ENCODE measurements at regions of chr19 and their contacts with region 1.

Region 1: GRCh38 chr19:46963093-46963734 is 56.4 kb upstream of the NPAS1 start:
- DNase-seq: no peak
- H3K4me3 ChIP-seq: no peak overlapping the region
- H3K27ac ChIP-seq: no peak overlapping the region
- H3K4me1 ChIP-seq: no peaks in the 10 kb centered on the region
- H3K27me3 ChIP-seq: no peaks in the 10 kb centered on the region
- CTCF ChIP-seq: no peak

Region 2: DNA sequence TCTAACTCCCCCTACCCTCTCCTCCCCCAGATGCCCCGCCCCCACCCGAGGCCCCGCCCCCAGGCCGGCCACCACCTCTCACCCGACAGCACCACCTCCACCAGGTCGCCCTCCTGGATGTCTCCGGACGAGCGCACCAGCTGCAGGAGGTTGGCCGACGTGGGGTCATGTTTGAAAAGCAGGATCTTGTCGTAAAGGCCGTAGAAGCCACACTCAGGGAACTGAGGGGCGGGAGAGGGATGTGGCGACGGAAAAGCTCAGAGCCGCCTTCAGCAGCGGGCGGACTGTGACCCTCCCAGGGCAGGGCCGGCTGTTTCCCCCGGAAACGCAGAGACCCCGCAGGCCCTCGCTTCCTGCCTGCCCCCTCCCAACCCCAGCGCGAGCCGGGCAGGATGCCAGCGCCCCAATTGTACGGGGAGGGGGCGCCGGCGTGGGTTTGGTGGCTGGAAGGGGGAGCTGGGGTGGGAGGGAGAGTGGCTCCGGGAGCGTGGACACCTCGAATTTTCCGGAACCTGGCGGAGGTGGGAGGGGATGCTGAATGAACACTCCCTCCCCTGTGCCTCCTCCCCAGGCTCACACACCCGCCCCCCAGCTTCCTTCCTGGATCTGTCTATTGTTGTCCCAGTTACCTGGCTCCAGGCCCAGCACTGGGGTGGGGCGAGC is 249.3 kb before region 1 on chr19:
- CTCF ChIA-PET with region 1: no interaction called
- POLR2A ChIA-PET with region 1: no interaction called
- intact Hi-C with region 1: no loop called
- DNase-seq: peak; percentile 86 to 92
- H3K4me3 ChIP-seq: peak overlapping the region; percentile 76
- H3K27ac ChIP-seq: peak overlapping the region; percentile 69
- H3K4me1 ChIP-seq: peaks cover 27% of the 10 kb centered on the region
- H3K27me3 ChIP-seq: no peaks in the 10 kb centered on the region
- CTCF ChIP-seq: no peak

Region 3: DNA sequence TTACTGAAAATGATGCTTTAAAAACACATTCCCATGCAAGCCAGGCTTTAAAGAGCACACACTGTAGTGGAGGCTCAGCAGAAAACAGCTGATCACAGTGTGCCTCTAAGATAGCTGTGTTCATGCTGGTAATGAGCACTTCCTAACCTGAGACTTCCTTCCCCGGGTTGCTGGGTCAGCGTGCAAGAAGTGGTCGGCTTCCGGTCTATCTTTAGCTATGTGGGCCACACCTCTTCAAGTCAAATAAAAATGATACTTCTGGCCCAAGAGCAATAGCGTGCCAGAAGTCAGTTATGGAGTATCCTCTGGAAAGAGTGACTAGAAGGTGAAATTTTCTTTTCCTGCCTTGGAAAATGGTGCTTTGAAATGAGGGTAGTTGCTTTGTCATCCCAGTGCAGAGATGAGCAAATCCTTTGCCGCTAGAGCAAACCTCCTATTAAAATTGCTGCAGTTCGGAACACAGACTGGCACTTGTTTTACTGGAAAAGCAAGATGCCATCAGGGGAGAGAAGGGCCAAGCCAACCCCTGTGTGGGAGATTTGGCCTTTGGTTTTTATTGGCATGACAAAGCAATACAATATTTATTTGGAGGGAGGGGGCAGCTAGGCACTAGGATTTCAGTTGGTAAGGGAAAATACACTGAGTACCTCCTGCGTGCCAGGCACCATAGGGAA is 38.2 kb before region 1 on chr19:
- CTCF ChIA-PET with region 1: no interaction called
- POLR2A ChIA-PET with region 1: no interaction called
- intact Hi-C with region 1: no loop called
- DNase-seq: peak; percentile 66 to 98
- H3K4me3 ChIP-seq: peak overlapping the region; percentile 50
- H3K27ac ChIP-seq: peak overlapping the region; percentile 95
- H3K4me1 ChIP-seq: peaks cover 65% of the 10 kb centered on the region
- H3K27me3 ChIP-seq: no peaks in the 10 kb centered on the region
- CTCF ChIP-seq: 0 out of 2 replicates have a peak, but pooled peaks have one; percentile 8

Region 4: DNA sequence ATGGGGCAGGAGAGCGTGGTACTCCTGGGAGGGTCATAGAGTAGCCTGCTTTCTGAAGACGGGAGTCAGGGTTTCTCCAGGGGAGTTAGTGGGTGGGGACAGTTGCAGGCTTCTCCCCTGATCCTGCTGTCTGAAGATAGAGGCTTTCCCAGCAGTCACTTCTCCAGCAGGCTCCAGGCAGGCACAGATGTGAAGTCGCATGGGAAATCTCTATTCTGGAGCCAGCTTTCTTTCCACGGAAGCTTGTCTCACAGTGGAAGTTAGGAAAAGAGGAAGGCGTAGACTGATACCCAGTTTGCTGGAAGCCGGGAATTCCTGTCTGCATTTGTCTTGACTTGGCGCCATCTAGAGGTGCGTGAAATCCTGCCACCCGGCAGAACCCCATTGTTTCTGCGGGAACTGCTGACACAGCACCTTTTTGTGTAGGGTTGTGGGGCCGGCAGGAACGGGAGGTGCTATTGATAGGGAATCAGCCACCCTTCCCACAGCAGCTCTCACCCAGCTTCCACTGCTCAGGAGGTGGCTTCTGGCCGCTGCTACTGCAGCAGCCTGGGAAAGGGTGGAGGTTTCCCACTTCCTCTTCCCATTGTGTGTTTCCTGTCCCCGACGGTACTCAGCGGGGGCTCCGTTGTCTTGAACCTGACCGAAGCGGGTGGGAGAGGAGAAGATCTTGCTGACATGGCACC is 27.9 kb after region 1 on chr19:
- CTCF ChIA-PET with region 1: interaction called, 3 read pairs
- POLR2A ChIA-PET with region 1: interaction called, 13 read pairs
- intact Hi-C with region 1: no loop called
- DNase-seq: peak; percentile 61 to 74
- H3K4me3 ChIP-seq: no peak overlapping the region
- H3K27ac ChIP-seq: no peak overlapping the region
- H3K4me1 ChIP-seq: no peaks in the 10 kb centered on the region
- H3K27me3 ChIP-seq: no peaks in the 10 kb centered on the region
- CTCF ChIP-seq: peak; percentile 93